HEK293 (cell line): ENCODE measurements at regions of chr12 and their contacts with region 1.

Region 1: DNA sequence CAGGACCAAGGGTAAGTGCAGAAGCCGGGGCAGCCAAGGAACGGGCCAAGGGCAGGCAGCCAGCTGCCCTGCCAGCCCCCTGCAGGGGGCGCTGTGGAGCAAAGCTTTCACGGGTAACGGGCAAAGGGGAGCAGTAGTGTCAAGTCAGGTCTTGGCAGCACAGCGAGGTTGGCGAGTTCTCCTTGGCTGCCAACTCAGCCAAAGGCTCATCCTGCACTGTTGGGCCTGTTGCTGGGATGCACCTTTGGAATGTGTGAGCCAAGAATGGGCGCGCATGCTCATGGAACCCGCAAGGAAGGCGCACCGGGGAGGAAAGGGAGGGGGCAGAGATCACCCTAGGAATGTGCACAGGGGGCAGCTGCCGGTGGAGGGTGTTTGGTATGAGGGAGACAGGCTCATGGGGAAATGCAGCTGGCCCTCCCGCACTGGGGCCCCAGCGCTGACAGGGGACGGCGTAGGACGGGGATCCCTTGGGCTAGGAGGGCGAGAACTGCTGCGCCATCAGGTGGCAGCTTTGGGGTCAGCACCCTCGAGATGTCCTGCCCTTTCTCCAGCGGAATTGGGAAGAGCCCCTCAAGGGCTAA is 138.0 kb downstream of the ASCL4 start:
- H3K4me3 ChIP-seq: peak overlapping the region; percentile 60
- H3K27ac ChIP-seq: no peak overlapping the region
- H3K4me1 ChIP-seq: no peaks in the 10 kb centered on the region
- CTCF ChIP-seq: peak; percentile 97

Region 2: GRCh38 chr12:107730618-107731341 is 181.7 kb before region 1 on chr12:
- CTCF ChIA-PET with region 1: no interaction called
- POLR2A ChIA-PET with region 1: no interaction called
- H3K4me3 ChIP-seq: no peak overlapping the region
- H3K27ac ChIP-seq: no peak overlapping the region
- H3K4me1 ChIP-seq: no peaks in the 10 kb centered on the region
- CTCF ChIP-seq: no peak

Region 3: DNA sequence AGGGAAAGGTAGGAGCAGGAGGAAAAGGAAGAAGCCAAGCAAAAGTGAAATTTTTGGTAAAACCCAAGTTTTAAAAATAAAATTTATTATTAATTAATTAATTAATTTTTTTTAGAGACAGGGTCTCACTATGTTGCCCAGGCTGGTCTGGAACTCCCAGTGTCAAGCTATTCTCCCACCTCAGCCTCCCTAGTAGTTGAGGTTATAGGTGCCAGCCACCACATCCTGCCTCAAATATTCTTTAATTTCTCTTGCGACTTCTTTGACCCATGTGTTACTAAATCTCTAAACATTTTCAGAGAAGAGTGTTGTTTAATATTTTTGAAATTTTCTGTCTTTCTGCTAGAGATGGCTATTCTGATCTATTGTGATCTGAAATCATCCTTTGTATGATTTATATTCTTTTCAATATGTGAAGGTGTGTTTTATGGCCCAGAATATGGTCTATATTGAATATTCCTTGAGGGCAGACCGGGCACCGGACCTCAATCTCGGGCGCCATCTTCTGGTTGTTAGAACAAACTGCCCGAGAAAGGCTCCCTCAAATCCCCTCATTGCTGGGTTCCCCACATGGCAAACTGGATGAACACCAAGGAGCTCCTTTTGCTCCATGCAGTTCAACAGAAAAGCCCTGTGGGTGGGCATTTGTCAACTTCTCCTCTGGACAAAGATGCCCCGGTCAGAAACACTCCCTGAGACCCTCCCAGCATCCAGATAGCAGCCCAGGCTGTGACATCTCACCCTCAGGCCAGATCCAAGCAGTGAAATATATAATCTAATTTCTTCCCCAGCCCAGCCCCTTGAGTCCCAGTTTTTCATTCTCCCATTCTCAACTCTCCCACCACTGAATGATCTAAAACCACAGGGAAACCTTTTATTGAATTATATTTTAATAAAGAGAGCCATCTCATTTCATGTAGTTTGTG is 27.5 kb before region 1 on chr12:
- CTCF ChIA-PET with region 1: interaction called, 19 read pairs
- POLR2A ChIA-PET with region 1: no interaction called
- H3K4me3 ChIP-seq: no peak overlapping the region
- H3K27ac ChIP-seq: no peak overlapping the region
- H3K4me1 ChIP-seq: no peaks in the 10 kb centered on the region
- CTCF ChIP-seq: peak; percentile 39; the same call in 1 of the 2 replicates

Region 4: DNA sequence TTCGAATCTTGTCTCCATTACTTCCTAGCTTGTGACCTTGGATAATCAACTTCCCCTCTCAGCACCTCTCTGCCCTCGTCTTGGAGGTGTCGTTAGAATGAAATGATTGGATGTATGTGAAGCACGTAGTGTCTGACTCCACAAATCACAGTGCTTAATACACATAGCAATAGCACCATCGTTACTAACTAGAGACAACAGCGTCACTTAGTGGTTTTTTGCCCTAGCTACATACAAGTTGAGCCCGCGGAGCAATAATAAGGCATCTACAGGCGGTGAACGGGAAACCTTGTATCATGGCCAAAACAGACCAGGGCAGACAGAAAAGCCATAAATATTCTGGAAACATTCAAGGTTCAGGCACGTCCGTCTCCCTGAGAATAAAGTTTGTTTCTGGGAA is 16.9 kb after region 1 on chr12:
- CTCF ChIA-PET with region 1: interaction called, 13 read pairs
- POLR2A ChIA-PET with region 1: no interaction called
- H3K4me3 ChIP-seq: no peak overlapping the region
- H3K27ac ChIP-seq: no peak overlapping the region
- H3K4me1 ChIP-seq: no peaks in the 10 kb centered on the region
- CTCF ChIP-seq: peak; percentile 65; the same call in 1 of the 2 replicates

Region 5: DNA sequence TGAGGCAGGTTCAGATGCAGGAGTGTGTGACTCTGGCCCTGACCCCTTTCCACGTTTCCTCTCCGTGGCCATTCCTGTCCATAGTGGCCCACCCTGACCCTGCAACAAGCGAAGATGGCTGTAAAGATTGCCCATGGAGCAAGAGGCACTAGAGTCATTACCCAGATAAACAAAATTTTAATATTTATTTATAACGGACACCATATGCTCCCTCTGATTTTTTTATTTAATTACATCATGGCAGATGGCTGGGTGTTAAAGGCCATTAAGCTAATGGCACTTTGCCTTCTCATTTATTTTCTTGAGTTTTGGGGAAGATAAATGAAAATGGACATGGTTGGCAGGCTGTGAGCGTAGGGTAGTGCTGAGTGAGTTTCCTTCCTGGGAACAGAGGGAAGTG is 275.3 kb after region 1 on chr12:
- CTCF ChIA-PET with region 1: no interaction called
- POLR2A ChIA-PET with region 1: no interaction called
- H3K4me3 ChIP-seq: no peak overlapping the region
- H3K27ac ChIP-seq: no peak overlapping the region
- H3K4me1 ChIP-seq: no peaks in the 10 kb centered on the region
- CTCF ChIP-seq: no peak